Sigmoid colon (tissue), 7 donors: ENCODE measurements at regions of chr1 and their contacts with region 1.

Region 1: DNA sequence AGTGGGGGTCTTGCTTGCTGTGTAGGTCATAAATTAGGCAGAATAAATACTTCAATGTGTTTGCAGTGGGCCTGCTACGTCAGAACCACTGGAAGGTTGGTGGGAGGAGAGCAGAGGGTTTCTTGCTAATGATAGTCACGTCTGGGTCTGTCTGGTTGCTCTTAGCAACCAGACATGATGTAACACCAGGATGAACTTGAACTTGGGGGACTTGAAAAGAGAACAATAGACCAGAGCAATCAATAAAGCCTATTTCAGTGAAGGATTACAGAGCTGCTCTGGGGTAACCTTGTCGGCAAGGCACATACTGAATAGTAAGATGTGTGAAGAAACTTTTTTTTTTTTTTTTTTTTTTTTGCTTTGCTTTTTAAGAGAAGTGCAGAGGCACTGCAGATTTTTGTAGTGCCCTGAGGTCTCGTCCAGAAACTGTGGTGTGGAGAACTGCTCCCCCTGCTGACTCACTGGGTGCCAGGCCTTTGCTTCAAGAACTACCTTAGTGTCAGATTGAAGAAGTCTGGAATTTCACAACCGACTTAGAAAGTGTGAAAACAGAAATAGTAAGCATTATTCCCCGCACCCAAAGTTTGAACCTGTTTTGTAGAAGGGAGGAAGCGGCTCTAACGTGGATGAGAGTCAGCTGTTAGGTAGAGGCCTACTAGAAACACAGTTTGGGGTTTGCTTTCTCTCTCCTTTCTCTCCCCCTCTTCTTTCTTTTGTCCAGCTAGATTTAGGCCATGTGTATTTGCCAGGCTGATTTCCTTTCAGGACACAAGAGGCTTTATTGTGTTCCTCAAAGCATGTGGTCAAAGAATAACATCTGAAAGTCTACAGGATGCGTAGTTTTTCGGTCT is 271.6 kb downstream of the TM2D1 start:
- DNase-seq: peak; percentile 97
- H3K4me3 ChIP-seq: peak overlapping the region in 1 of 4 donors; percentile 3
- H3K27ac ChIP-seq: peak overlapping the region; percentile 70 to 80 (median 76)
- H3K4me1 ChIP-seq: peaks cover 0 to 57% (median 50%) of the 10 kb centered on the region in 4 donors
- H3K27me3 ChIP-seq: no peaks in the 10 kb centered on the region
- CTCF ChIP-seq: peak; percentile 54 to 64 (median 60)
- EP300 ChIP-seq: no peak
- POLR2A ChIP-seq: no peak

Region 2: GRCh38 chr1:60969971-60970509 is 483.3 kb before region 1 on chr1:
- intact Hi-C with region 1: loop called (anchors 5 kb)
- DNase-seq: no peak
- H3K4me3 ChIP-seq: no peak overlapping the region
- H3K27ac ChIP-seq: peak overlapping the region in 3 of 4 donors; percentile 5 to 22 (median 9)
- H3K4me1 ChIP-seq: peaks cover 0 to 22% (median 11%) of the 10 kb centered on the region in 4 donors
- H3K27me3 ChIP-seq: no peaks in the 10 kb centered on the region
- CTCF ChIP-seq: peak; percentile 22 to 45 (median 38)
- EP300 ChIP-seq: no peak
- POLR2A ChIP-seq: no peak

Region 3: GRCh38 chr1:61184040-61184713 is 269.2 kb before region 1 on chr1:
- intact Hi-C with region 1: loop called (anchors 10 kb)
- DNase-seq: peak; percentile 98
- H3K4me3 ChIP-seq: peak overlapping the region; percentile 29 to 41 (median 38)
- H3K27ac ChIP-seq: peak overlapping the region; percentile 78 to 88 (median 84)
- H3K4me1 ChIP-seq: peaks cover 0 to 81% (median 62%) of the 10 kb centered on the region in 4 donors
- H3K27me3 ChIP-seq: no peaks in the 10 kb centered on the region
- CTCF ChIP-seq: no peak
- EP300 ChIP-seq: no peak
- POLR2A ChIP-seq: no peak

Region 4: DNA sequence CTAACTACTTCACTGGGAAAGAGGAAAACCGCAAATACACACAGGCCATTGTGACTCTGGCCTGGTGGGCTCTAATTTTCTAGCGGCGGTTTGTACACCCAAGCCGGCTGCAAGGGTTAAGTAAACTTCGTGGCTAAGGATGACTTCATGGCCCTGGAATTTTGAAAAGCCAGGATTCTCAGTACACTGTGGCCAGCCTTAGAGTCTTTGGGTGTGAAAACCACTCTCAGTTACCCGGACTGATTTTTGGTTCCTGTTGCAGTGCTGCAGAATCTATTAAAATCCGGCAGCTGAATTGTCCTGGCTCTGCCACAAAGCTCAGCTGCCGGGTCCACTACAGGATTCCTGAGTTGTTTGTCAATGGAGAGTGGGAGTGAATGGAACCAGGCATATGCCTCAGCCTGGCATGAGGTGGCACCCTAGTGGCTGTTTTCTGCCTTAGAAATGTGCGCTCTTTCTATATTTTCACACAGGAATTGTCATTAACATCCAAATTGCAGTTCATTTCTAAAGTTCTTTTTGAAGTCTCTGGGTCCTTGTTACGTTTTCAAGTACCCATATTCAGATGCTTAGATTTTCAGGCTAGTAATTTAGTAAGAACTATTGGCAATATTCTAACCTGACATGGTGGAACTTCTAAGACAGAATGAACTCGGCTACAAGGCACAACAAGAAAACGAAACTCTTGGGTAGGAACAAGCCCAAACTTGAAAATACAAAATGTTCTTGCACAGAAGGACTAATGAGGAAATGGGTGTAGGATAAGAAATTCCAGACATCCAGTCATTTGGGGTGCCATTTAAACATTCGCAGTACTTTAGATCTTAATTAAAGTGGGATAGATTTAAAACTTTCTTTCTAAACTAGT is 115.1 kb before region 1 on chr1:
- intact Hi-C with region 1: loop called (anchors 1 kb)
- DNase-seq: peak; percentile 84
- H3K4me3 ChIP-seq: peak overlapping the region in 2 of 4 donors; percentile 5
- H3K27ac ChIP-seq: peak overlapping the region; percentile 64 to 80 (median 78)
- H3K4me1 ChIP-seq: peaks cover 0 to 43% (median 38%) of the 10 kb centered on the region in 4 donors
- H3K27me3 ChIP-seq: no peaks in the 10 kb centered on the region
- CTCF ChIP-seq: peak; percentile 55 to 77 (median 68)
- EP300 ChIP-seq: peak in 1 of 4 donors; percentile 2
- POLR2A ChIP-seq: no peak

Region 5: GRCh38 chr1:61397935-61398334 is 55.4 kb before region 1 on chr1:
- intact Hi-C with region 1: loop called (anchors 5 kb)
- DNase-seq: no peak
- H3K4me3 ChIP-seq: no peak overlapping the region
- H3K27ac ChIP-seq: peak overlapping the region in 3 of 4 donors; percentile 50 to 81 (median 75)
- H3K4me1 ChIP-seq: peaks cover 0 to 36% (median 32%) of the 10 kb centered on the region in 4 donors
- H3K27me3 ChIP-seq: no peaks in the 10 kb centered on the region
- CTCF ChIP-seq: no peak
- EP300 ChIP-seq: no peak
- POLR2A ChIP-seq: no peak

Region 6: DNA sequence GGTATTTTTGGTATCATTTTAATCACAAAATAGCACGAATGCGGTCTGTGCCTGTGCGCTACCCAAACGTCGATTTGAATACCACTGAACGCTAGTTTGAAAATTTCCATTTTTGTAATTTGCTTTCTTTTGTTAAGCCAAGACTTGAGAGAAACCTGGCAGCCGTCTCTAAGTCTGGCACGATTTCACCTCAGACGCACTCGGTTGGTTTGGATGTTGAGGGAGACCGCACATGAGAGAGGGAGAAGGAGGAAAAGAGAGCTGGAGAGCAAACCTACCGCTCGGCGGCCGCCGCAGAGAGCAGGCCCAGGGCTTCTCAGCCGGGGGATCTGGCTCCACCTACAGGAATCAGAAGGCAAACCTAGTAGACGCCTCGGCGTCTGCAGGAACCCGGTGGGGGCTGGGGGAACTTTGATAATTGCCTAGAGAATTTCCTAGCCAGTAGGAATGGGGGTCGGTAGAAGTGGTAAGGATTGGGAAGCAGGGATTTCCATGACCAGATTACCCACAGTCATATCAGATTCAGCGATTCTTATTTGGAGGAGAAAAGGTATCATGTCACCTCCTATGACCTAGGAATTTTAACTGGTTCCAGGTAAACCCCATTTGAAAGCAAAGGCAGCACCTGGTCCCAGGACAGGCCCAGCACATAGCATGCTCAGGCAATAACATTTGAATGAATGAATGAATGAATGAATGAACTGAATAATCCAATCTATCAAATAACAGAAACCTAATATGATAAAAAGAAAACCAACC is 188.4 kb after region 1 on chr1:
- intact Hi-C with region 1: loop called (anchors 5 kb)
- DNase-seq: peak; percentile 90
- H3K4me3 ChIP-seq: peak overlapping the region in 2 of 4 donors; percentile 21 to 22
- H3K27ac ChIP-seq: peak overlapping the region; percentile 66 to 80 (median 76)
- H3K4me1 ChIP-seq: peaks cover 0 to 54% (median 39%) of the 10 kb centered on the region in 4 donors
- H3K27me3 ChIP-seq: no peaks in the 10 kb centered on the region
- CTCF ChIP-seq: peak; percentile 17 to 67 (median 43)
- EP300 ChIP-seq: no peak
- POLR2A ChIP-seq: no peak

Region 7: GRCh38 chr1:61851849-61852669 is 398.7 kb after region 1 on chr1:
- intact Hi-C with region 1: loop called (anchors 5 kb)
- DNase-seq: no peak
- H3K4me3 ChIP-seq: no peak overlapping the region
- H3K27ac ChIP-seq: no peak overlapping the region
- H3K4me1 ChIP-seq: peaks cover 0 to 8% (median 7%) of the 10 kb centered on the region in 4 donors
- H3K27me3 ChIP-seq: no peaks in the 10 kb centered on the region
- CTCF ChIP-seq: peak in 3 of 4 experiments; percentile 50 to 61 (median 54)
- EP300 ChIP-seq: no peak
- POLR2A ChIP-seq: no peak